Cardiac septum (tissue), 1 donor: ENCODE measurements at regions of chr9 and their contacts with region 1.

Region 1: GRCh38 chr9:133538851-133539833 is 4.6 kb downstream of the ADAMTSL2 start:
- DNase-seq: peak; percentile 85

Region 2: DNA sequence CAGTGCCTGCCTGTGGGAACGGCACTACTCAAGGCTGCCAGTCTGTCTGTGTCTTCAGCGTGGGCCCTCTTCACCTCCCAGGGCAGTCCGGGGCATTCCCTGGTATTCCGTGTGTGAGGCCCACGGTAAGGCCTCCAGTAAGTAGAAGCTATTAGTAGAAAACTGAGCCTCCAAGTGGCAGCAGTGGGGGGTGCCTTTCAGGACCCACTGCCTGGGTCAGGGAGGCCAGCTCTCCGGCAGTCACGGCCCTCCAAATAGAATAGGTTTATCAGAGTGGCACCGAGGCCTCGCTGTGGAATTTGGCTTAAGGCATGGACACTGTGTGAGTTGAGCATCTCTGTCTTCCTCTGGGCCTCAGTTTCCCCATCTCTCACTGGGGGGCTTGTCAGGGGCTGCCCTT is 18.4 kb after region 1 on chr9:
- intact Hi-C with region 1: loop called (anchors 2 kb)
- DNase-seq: no peak

Region 3: DNA sequence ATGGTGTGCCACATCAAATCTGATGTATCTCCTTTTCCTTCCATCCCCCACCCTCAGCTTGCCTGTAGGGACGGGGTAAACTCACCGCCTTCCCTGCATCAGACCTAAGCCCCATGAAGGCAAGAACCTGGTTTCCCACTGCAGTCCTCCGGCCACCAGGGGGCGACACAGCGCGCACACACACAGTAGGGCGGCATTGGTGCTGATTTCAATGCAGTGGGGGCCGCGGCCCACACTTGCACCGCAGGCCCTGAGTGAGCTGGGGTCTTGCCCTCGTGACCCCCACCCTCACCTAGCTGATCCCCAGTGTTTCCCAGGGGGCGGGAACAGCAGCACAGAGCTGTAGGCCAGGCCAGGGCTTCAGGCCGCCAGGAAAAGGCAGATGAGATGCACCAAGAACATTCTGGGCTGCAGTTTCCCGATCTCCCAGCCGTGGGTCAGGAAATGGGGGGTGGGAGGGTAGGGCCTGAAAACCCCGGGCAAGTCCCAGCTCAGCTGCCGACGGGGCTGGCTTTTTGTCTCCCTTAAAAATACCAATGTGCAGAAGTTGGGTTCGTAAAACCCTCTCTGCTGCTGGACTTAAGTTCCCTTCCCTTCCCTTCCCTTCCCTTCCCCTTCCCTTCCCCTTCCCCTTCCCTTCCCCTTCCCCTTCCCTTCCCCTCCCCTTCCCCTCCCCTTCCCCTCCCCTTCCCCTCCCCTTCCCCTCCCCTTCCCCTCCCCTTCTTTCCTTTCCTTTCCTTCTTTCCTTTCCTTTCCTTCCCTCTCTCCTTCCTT is 50.5 kb after region 1 on chr9:
- intact Hi-C with region 1: no loop called
- DNase-seq: no peak